ENCODE measurements at regions of chr11 and their contacts with region 1.

Region 1: DNA sequence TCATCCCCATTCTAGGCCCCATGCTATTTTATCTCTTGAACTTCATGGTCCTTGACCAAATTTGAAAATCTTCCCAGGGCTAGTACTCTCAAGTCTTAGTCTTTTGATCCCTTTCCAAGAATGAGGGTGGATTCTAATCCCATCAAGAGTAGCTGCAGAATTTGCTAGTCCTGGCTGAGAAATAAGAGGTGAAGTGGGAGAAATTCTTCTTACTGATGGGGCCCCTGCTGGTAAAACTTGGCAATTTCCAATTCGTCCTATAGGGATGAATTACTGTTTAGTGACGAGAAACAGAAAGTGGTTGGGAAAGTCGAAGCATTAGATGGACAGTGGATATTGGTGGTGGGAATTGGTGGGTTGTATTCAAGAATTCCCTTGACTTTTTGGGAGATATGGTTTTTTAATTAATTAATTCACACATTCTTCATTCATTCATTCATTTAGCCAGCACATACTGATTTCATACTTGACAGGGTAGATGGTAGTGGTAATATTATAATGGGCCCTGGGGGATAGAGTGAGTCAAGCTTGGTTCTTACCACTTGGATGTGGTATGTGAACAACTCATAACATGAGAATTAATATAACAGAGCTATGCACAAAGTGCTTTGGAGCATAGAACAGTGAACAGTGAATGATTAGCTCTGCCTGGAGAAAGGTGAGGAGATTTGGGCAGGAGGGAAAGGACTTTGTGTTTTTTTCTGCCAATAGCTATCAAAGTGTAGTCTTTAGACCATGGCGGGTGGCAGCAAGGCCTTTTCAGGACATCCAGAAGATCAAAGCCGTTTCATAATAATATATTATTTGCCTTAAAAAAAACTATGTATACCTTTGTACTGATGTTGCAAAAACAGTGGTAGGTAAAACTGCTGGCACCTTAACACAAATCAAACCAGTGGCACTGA is 103.8 kb downstream of the STIM1 start:
- DNase-seq: no peak
- ATAC-seq: peak; percentile 73
- H3K4me3 Mint-ChIP-seq: no peak overlapping the region
- H3K27ac Mint-ChIP-seq: peak overlapping the region; percentile 10
- H3K4me1 Mint-ChIP-seq: peaks cover 87% of the 10 kb centered on the region
- H3K27me3 Mint-ChIP-seq: no peaks in the 10 kb centered on the region

Region 2: DNA sequence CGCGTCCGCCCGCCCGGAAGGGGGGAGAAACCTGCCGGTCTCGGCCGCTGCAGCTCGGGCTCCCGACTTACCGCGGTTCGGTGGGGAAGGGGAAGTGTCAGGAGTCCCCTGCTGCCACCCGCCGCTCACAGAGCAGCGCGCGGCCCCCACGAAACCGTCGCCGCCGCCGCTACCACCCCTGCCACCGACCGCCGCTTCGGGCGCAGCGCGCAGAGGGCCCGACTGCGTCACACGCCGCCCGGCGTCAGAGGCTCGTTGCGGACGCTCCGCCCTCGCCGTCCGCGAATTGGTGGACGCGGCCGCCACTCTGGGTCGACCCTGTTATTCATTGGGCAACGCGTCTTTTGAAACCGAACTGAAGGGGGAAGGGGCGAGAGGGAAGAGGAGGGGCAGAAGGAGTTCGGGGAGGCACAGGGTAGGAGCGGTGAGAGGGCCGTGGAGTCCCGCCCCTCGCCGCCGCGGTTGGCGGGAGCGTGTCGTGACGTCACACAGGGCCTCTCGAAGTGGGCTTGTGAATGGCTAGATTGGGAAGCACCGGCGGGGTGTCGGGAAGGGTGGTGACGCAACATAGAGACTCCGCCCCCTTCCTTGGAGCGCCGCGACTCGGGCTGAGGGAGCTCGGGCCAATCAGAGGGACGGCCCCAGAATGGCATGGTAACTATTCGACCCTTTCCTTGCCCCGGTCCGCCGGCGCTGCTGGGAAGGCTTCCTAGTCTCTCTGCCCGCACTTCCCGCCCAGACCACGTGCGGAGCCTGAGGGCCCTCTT is 161.8 kb before region 1 on chr11 and contains the start of gene NUP98:
- CTCF ChIA-PET with region 1: no interaction called
- POLR2A ChIA-PET with region 1: no interaction called
- intact Hi-C with region 1: no loop called
- DNase-seq: peak; percentile 100
- ATAC-seq: peak; percentile 98
- H3K4me3 Mint-ChIP-seq: peak within 1 kb of the TSS; percentile 99
- H3K27ac Mint-ChIP-seq: peak within 1 kb of the TSS; percentile 100
- H3K4me1 Mint-ChIP-seq: peaks cover 39% of the 10 kb centered on the region
- H3K27me3 Mint-ChIP-seq: no peaks in the 10 kb centered on the region
- total RNA-seq, gene NUP98: 96.0 to 134 TPM

Region 3: GRCh38 chr11:3841426-3842350 is 117.6 kb before region 1 on chr11:
- CTCF ChIA-PET with region 1: interaction called, 3 read pairs
- POLR2A ChIA-PET with region 1: no interaction called
- intact Hi-C with region 1: loop called in 1 of 2 experiments (anchors 1 kb)
- DNase-seq: peak; percentile 97
- ATAC-seq: peak; percentile 30
- H3K4me3 Mint-ChIP-seq: peak overlapping the region; percentile 93
- H3K27ac Mint-ChIP-seq: peak overlapping the region; percentile 93
- H3K4me1 Mint-ChIP-seq: peaks cover 54% of the 10 kb centered on the region
- H3K27me3 Mint-ChIP-seq: no peaks in the 10 kb centered on the region

Region 4: GRCh38 chr11:3905080-3905953 is 54.0 kb before region 1 on chr11:
- CTCF ChIA-PET with region 1: interaction called, 6 read pairs
- POLR2A ChIA-PET with region 1: interaction called, 6 read pairs
- intact Hi-C with region 1: loop called (anchors 1 to 5 kb)
- DNase-seq: peak; percentile 83
- ATAC-seq: peak; percentile 98
- H3K4me3 Mint-ChIP-seq: peak overlapping the region; percentile 5
- H3K27ac Mint-ChIP-seq: peak overlapping the region; percentile 55
- H3K4me1 Mint-ChIP-seq: peaks cover 77% of the 10 kb centered on the region
- H3K27me3 Mint-ChIP-seq: no peaks in the 10 kb centered on the region

Region 5: GRCh38 chr11:3920148-3920852 is 39.0 kb before region 1 on chr11:
- CTCF ChIA-PET with region 1: no interaction called
- POLR2A ChIA-PET with region 1: no interaction called
- intact Hi-C with region 1: loop called (anchors 1 to 2 kb)
- DNase-seq: peak; percentile 88
- ATAC-seq: peak; percentile 71
- H3K4me3 Mint-ChIP-seq: no peak overlapping the region
- H3K27ac Mint-ChIP-seq: peak overlapping the region; percentile 55
- H3K4me1 Mint-ChIP-seq: peaks cover 65% of the 10 kb centered on the region
- H3K27me3 Mint-ChIP-seq: no peaks in the 10 kb centered on the region

Region 6: DNA sequence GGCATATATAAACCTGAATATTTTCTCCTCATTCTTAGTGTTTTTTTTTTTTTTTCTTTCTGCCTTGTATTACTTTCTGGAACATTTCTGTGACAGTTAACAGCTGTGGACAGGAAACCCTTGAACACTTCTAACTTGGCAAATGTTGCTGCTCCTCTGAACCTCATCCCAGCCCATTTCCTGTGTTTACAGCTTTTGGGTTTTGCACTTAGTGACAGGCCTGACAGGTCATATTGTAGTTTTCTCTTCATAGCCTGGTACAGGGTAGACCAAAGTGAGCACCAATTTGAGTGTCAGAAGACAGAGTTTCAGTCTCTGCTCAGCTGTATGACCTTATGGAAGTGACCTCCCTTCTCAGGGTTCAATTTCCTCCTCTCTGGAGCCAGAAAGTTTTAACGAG is 12.2 kb before region 1 on chr11:
- CTCF ChIA-PET with region 1: interaction called, 6 read pairs
- POLR2A ChIA-PET with region 1: no interaction called
- intact Hi-C with region 1: loop called in 1 of 2 experiments (anchors 1 kb)
- DNase-seq: peak; percentile 60
- ATAC-seq: peak; percentile 85
- H3K4me3 Mint-ChIP-seq: peak overlapping the region; percentile 34
- H3K27ac Mint-ChIP-seq: peak overlapping the region; percentile 88
- H3K4me1 Mint-ChIP-seq: peaks cover 94% of the 10 kb centered on the region
- H3K27me3 Mint-ChIP-seq: no peaks in the 10 kb centered on the region

Region 7: DNA sequence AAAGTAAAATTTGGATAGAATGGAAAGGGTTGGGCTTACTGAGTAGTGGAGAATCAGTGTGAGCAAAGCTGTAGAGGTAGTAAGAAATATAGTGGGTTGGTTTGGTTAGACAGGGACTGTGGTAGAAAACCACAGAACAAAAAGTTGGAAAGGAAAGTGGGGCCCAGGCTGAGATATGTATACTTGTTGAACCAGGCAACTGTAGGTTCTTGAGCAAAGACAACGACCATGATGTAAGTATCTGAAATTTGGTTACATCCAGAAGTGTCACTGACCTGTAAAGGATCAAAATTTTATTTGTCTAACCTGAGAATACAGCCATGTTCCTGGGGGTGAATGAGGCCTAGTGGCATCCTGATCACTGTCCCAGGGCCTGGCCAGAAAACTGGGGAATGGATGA is 10.3 kb after region 1 on chr11:
- CTCF ChIA-PET with region 1: interaction called, 8 read pairs
- POLR2A ChIA-PET with region 1: interaction called, 7 read pairs
- intact Hi-C with region 1: loop called (anchors 1 to 2 kb)
- DNase-seq: peak; percentile 59
- ATAC-seq: peak; percentile 77
- H3K4me3 Mint-ChIP-seq: peak overlapping the region; percentile 26
- H3K27ac Mint-ChIP-seq: peak overlapping the region; percentile 92
- H3K4me1 Mint-ChIP-seq: peaks cover 77% of the 10 kb centered on the region
- H3K27me3 Mint-ChIP-seq: no peaks in the 10 kb centered on the region

Region 8: DNA sequence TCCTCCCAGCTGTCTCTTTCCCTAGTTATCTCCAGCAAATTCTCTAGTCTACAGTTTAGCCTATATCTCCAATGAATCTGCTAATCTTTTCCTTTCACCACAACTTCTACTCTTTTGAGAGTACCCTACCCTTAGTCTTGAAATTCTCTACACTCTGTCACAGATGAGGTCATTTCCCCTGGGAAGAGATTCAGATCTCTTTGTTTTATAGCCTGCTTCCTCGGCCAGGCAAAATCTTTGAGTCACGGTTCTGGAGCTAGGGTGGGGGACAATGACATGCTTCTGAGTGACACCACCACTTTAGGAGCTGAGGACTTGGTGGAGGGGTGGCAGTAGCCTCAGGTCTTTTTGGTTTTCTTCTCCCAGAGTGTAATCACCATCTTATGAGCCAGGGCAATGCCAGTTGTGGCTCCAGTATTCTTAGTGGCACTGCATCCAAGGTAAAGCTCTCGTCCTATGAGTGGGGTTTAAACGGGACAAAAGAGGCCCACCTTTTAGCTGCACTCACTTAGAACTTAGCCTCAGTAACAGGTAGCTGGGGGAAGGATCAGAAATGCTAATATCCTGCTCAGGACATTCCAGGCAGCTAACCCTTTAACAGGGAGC is 36.8 kb after region 1 on chr11:
- CTCF ChIA-PET with region 1: no interaction called
- POLR2A ChIA-PET with region 1: no interaction called
- intact Hi-C with region 1: loop called in 1 of 2 experiments (anchors 5 kb)
- DNase-seq: no peak
- ATAC-seq: no peak
- H3K4me3 Mint-ChIP-seq: no peak overlapping the region
- H3K27ac Mint-ChIP-seq: no peak overlapping the region
- H3K4me1 Mint-ChIP-seq: peaks cover 33% of the 10 kb centered on the region
- H3K27me3 Mint-ChIP-seq: no peaks in the 10 kb centered on the region

Region 9: DNA sequence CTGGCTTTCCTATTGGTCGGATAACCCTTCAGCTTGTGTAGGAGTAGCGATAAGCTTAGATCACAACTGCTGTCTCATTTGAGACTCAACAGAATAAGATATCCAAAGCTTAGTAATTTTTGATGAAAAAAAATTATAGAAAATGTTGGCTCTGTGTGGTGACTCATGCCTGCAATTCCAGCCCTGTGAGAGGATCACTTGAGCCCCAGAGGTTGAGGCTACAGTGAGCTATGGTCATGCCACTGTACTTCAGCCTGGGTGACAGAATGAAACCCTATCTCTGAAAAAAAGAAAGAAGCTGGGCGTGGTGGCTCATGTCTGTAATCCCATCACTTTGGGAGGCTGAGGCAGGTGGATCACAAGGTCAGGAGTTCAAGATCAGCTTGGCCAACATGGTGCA is 79.7 kb after region 1 on chr11:
- CTCF ChIA-PET with region 1: no interaction called
- POLR2A ChIA-PET with region 1: no interaction called
- intact Hi-C with region 1: no loop called
- DNase-seq: no peak
- ATAC-seq: no peak
- H3K4me3 Mint-ChIP-seq: no peak overlapping the region
- H3K27ac Mint-ChIP-seq: no peak overlapping the region
- H3K4me1 Mint-ChIP-seq: peaks cover 38% of the 10 kb centered on the region
- H3K27me3 Mint-ChIP-seq: no peaks in the 10 kb centered on the region

Measured in activated CD4-positive, alpha-beta T cell treated with anti-CD3 and anti-CD28 coated beads for 36 hours (primary cell).